ENCODE measurements at regions of chr11 and their contacts with region 1.

Region 1: DNA sequence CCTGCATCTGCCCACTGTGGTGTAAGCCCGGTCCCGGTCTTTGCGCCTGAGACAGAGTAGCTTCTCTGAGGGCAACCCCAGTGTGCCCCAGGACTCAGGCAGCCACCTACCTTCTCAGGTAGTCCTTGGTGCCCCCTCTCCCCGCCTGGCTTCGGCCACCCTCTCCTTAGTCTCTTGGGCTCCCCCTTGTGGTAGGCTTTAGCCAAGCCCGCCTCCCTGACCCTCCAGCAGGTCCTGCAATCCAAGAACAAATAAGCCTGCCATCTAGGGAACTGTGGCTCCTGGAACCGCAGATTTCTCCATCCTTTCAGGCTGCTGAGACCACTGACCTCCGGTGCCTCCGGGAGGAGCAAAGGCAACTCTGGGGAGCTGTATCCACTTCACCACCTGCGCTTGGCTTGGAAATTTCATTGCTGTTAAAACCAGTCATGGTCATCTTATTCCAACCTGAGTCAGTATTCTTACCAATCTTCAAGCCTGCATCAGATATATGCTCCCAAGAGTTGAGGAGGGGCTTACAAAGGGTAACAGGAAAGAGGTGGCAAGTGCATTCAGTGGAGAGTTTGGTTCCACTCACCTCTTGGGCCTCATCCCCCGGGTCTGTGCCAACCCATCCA is 52.8 kb upstream of the TENM4 start:
- DNase-seq: peak; percentile 85
- H3K4me3 ChIP-seq: no peak overlapping the region; a peak in 1 of 4 replicates
- H3K27ac ChIP-seq: no peak overlapping the region
- H3K4me1 ChIP-seq: peaks cover 0 to 2% of the 10 kb centered on the region in 2 experiments; a peak in 1 of 4 replicates
- H3K27me3 ChIP-seq: no peaks in the 10 kb centered on the region
- CTCF ChIP-seq: peak; percentile 93
- EP300 ChIP-seq: no peak
- RAD21 ChIP-seq: peak; percentile 75

Region 2: DNA sequence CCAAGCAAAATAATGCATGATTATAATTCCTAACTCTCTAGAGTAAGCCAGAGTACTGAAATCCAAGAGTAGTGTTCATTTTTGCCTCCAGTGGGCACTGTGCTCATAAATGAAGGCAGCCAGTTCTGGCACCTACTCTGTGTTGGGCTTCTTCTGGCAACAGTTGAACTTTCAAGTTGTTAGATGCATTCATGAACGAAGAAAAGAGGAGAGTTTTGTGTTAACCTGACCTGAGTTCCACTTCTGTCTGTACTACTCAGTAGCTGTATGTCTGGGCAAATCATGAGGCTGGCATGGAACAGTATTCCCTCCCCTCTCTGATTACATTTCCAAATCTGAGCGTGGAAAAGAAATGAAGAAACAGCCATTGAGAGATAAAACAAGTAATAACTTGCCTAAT is 32.5 kb before region 1 on chr11:
- CTCF ChIA-PET with region 1: interaction called, 24 read pairs
- POLR2A ChIA-PET with region 1: no interaction called
- DNase-seq: peak; percentile 18
- H3K4me3 ChIP-seq: no peak overlapping the region; a peak in 1 of 4 replicates
- H3K27ac ChIP-seq: no peak overlapping the region
- H3K4me1 ChIP-seq: no peaks in the 10 kb centered on the region
- H3K27me3 ChIP-seq: no peaks in the 10 kb centered on the region
- CTCF ChIP-seq: peak; percentile 78
- EP300 ChIP-seq: no peak
- RAD21 ChIP-seq: peak; percentile 68

Region 3: DNA sequence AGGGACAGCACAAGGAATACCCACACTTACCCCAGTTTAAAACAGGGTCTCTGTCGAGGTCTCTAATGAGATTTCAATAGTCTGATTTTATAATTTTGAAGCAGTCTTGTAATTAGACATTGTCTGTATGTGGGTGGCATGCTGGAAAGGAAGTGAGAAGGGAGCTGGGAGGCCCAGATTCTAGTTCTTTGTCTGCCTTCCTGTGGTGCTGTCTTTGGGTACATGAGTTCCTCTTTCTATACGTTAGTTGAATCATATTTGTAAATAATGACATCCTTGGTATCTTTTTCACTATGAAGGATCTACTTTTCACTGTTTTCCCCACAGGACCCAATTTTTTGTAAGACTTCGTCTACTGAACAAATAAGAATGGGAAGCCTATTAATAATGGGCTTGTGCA is 10.9 kb before region 1 on chr11:
- CTCF ChIA-PET with region 1: interaction called, 14 read pairs
- POLR2A ChIA-PET with region 1: no interaction called
- DNase-seq: no peak
- H3K4me3 ChIP-seq: no peak overlapping the region
- H3K27ac ChIP-seq: no peak overlapping the region
- H3K4me1 ChIP-seq: no peaks in the 10 kb centered on the region
- H3K27me3 ChIP-seq: no peaks in the 10 kb centered on the region
- CTCF ChIP-seq: no peak
- EP300 ChIP-seq: no peak
- RAD21 ChIP-seq: no peak

Region 4: GRCh38 chr11:79512706-79513469 is 19.2 kb after region 1 on chr11:
- CTCF ChIA-PET with region 1: interaction called, 27 read pairs
- POLR2A ChIA-PET with region 1: no interaction called
- DNase-seq: peak; percentile 57
- H3K4me3 ChIP-seq: no peak overlapping the region
- H3K27ac ChIP-seq: peak overlapping the region in 1 of 2 experiments; percentile 55; a peak in 2 of 4 replicates
- H3K4me1 ChIP-seq: peaks cover 0 to 21% of the 10 kb centered on the region in 2 experiments; a peak in 2 of 4 replicates
- H3K27me3 ChIP-seq: peaks cover 7% of the 10 kb centered on the region; the same call in 1 of the 2 replicates
- CTCF ChIP-seq: no peak
- EP300 ChIP-seq: no peak; a peak in 1 of 4 replicates
- RAD21 ChIP-seq: no peak

Measured in SK-N-SH (cell line).